ENCODE measurements at regions of chr6 and their contacts with region 1.

Region 1: DNA sequence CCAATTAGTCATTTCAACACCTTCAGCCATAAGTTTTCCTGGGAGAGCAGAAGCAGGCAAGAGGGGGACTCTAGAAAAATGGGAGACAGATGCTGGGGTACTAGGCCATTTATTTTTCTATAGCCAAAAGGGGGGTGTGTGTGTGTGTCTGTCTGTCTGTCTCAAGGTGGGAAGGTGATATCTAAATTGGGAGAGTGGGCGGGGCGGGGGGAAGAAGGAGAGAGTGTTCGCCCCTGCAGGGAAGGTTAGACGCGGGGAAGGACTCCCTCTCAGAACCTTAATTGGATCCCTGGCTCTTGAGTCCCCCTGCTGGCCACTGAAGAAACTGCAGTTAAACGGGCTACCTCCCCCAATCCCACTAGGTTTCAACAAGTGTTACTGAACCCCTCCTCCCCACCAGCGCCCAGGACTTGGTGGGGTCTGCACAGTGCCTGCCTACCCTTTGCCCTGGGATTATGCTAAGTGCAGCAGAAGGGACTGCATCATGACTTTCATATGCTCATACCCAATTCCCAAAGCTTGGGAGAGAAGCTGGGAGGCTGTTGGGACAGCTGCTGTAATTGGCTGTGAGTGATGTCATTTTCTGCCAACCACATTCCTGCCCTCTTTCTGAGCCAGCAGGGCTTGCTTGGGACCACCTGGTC is 45.8 kb downstream of the FOXP4 start:
- DNase-seq: no peak
- H3K4me3 ChIP-seq: no peak overlapping the region
- H3K27me3 ChIP-seq: no peaks in the 10 kb centered on the region
- CTCF ChIP-seq: peak; percentile 90

Region 2: GRCh38 chr6:41424370-41425058 is 167.5 kb before region 1 on chr6:
- CTCF ChIA-PET with region 1: interaction called, 98 read pairs
- POLR2A ChIA-PET with region 1: no interaction called
- DNase-seq: peak; percentile 15
- H3K4me3 ChIP-seq: no peak overlapping the region
- H3K27me3 ChIP-seq: peaks cover 27% of the 10 kb centered on the region
- CTCF ChIP-seq: peak; percentile 86

Region 3: DNA sequence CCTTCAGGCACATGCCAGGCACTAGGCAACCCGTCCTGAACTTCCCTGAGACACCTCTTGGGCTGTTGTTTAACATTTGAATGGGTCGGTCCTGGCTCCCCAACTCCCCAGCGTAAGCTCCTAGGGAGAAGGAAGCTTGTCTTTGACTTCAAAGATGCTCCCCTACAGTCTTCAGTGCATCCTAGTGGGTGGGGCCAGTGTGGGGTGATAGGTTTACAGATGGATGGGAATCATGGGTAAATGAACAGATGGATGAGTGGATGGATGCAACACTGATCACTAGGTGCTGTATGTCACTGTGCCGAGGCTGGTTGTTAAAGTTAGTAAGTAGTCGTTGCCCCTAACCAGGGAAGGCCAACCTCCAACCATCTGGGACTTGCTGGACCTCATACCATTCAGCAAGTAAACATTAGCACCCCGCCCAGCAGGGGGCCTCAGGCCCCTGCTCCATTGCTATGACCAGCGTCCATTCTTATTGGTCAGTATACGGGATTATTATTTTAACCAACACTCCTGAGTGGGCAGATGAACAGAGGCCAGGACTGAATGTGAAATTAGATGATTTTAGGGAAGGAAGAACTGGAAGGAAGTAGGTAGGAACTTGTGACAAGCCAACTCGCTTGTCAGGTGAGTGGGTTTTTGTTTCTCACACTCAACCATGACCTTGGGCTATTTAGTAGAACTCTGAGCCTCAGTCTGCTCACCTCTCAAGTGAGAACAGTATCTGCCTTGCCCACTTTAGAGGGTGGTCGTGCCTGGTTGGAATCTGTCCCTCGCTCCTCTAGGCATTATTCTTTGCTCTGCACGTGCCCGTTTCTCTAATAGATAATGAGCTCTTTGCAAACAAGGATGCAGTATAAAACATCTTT is 128.7 kb before region 1 on chr6:
- CTCF ChIA-PET with region 1: interaction called, 50 read pairs
- POLR2A ChIA-PET with region 1: no interaction called
- DNase-seq: no peak
- H3K4me3 ChIP-seq: no peak overlapping the region
- H3K27me3 ChIP-seq: peaks cover 5% of the 10 kb centered on the region; the same call in 1 of the 2 replicates
- CTCF ChIP-seq: peak; percentile 76

Region 4: DNA sequence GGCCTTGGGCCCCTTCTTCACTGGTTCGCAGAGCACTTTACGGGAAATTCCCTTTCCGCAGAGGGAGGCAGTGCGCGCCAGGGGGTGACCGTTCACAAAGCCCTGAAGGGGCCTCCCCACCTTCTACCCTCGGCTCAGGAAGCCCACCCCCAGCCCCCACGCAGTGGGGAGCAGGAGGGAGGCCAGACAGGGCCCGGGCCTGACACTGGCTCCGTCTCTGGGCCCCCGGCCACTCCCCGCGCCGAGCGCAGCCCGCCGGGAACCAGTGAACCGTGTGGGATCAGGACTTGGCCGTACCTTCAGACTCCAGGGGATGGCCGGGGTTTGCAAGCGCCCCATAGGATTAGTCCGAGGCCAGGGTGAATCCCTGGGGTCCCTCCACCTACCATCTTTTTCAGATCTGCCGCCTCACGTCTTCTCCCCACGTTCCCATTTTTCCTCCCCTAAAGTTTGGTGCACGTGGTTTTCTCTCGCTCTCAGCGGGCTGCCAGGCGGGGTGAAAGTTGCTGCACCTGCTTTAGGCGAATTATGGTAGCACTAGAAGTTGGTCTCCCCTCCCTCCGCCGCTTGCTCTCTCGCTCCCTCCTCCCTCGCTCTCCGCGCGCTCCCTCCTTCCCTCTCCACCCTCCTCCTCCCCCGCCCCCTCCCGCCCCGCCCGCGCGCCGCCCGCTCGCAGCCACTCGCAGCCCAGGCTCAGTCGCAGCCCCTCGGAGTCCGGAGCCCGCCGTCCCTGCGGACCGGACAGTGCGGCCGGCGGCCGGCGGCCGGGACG is 46.1 kb before region 1 on chr6 and contains the start of gene FOXP4:
- CTCF ChIA-PET with region 1: interaction called, 10 read pairs
- POLR2A ChIA-PET with region 1: interaction called, 4 read pairs
- DNase-seq: peak; percentile 35
- H3K4me3 ChIP-seq: peak within 1 kb of the TSS; percentile 90
- H3K27me3 ChIP-seq: no peaks in the 10 kb centered on the region
- CTCF ChIP-seq: 0 out of 2 replicates have a peak, but pooled peaks have one; percentile 2
- polyA plus RNA-seq, gene FOXP4: 1.9 and 4.0 TPM in 2 replicates

Region 5: DNA sequence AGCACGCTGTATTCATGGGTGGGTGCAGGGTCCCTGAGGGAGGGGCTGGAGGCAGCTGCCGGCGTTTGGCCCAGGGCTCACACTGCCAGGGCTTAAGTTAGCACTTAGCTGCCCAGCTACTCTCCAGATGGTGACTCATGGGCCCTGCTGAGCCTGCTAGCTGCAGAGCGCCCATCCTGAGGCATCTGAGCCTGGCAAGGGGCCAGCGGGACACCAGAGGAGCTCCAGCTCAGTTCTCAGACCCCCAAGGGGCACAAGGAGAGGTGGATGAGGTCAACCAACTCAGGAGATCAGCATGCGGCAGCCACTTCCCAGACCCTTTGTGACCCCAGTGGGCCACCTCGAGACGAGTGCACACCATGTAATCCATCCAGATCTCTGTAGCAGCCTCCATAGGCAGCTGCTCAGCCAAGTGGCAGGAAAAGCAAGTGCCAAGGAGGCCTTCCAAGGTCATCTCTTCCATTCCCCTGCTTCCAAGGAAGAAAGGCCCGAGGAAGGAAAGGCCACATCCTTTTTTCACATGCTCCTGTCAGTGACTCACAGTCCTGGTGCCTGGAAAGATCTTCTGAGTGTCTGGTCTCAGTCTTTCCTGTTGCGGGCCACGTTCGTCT is 10.5 kb before region 1 on chr6:
- CTCF ChIA-PET with region 1: interaction called, 51 read pairs
- POLR2A ChIA-PET with region 1: interaction called, 3 read pairs
- DNase-seq: no peak
- H3K4me3 ChIP-seq: no peak overlapping the region
- H3K27me3 ChIP-seq: no peaks in the 10 kb centered on the region
- CTCF ChIP-seq: no peak

Region 6: DNA sequence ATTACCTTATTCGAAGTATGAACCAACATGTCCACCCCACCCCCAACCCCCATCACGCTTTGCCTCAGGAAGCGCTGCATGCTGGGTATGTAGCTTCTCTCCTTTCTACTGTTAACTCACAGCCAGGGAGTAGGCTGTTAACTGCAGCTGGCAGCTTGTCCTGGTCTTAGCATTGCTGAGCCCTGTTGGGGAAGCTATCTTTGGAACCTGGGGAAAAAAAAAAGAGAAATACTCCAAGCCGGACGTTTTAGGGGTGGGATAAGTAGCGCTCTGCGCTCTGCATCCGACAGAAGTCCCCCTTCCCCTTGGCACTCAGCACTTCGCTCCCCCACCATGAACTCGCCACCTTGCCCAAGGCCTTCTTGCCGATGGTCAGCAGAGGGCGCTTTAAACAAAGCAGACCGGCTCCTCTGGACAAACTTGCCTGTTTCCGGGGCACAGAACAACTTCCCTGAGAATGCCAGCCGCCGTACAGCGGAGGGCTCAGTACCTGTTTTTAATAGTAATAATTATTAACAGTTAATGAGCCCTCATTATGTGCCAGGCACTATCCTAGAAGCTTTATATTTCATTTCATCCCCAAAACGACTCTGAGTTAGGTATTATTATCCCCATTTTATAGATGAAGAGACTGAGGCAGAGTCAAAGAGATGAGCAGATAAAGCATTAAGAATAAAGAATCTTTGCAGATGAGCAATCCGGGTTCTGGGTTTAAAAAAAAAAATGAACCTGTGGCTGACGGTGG is 11.1 kb after region 1 on chr6:
- CTCF ChIA-PET with region 1: interaction called, 15 read pairs
- POLR2A ChIA-PET with region 1: no interaction called
- DNase-seq: no peak
- H3K4me3 ChIP-seq: no peak overlapping the region
- H3K27me3 ChIP-seq: no peaks in the 10 kb centered on the region
- CTCF ChIP-seq: peak; percentile 94

Region 7: GRCh38 chr6:41683510-41684310 is 91.7 kb after region 1 on chr6:
- CTCF ChIA-PET with region 1: interaction called, 27 read pairs
- POLR2A ChIA-PET with region 1: no interaction called
- DNase-seq: no peak
- H3K4me3 ChIP-seq: peak overlapping the region; percentile 2; the same call in 1 of the 2 replicates
- H3K27me3 ChIP-seq: no peaks in the 10 kb centered on the region
- CTCF ChIP-seq: peak; percentile 96

Region 8: DNA sequence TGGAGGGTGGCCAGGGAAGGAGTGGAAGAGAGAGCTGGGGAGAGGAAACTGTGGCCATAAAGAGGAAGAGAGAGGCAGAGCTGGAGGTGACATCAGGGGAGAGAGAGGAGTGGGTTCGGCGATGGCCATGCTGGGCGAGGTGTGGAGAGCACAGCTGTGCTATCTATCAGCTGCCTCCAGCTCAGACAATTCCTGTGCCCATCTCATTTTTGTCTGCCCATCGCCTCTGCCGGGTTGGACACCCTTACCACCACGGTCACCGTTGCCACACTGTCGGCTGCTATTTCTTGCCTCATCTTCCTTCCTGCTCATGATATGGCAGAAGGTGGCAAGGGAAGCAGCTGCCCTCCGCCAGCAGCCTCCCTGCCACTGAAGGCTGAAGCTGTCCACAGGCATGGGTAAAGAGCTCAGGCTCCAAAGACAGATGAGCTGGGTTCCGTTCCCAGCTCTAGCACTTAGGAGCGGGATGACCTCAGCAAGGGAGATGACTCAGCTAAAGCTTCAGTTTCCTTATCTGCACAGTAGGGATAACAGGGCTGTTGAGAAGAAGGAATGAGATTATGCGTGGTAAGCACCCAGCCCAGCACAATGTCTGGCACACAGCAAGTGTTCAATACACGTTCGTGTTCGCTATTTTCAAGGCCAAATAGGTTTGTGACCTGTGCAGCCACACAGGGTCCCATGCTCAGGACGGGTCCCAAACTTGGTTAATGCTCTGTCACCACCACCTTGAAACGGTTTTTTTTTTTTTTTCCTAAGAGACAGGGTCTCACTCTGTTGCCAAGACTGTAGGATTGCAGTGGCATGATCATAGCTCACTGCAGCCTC is 436.5 kb after region 1 on chr6:
- CTCF ChIA-PET with region 1: no interaction called
- POLR2A ChIA-PET with region 1: no interaction called
- DNase-seq: no peak
- H3K4me3 ChIP-seq: no peak overlapping the region
- H3K27me3 ChIP-seq: no peaks in the 10 kb centered on the region
- CTCF ChIP-seq: no peak

Region 9: GRCh38 chr6:42104095-42104806 is 512.3 kb after region 1 on chr6:
- CTCF ChIA-PET with region 1: no interaction called
- POLR2A ChIA-PET with region 1: no interaction called
- DNase-seq: no peak
- H3K4me3 ChIP-seq: no peak overlapping the region
- H3K27me3 ChIP-seq: peaks cover 5% of the 10 kb centered on the region
- CTCF ChIP-seq: peak; percentile 65

Measured in BJ (cell line).